ENCODE measurements at regions of chr5 and their contacts with region 1.

Region 1: GRCh38 chr5:103232393-103232999 is 26.1 kb upstream of the MACIR start:
- DNase-seq: peak in 2 of 35 experiments; percentile 18 to 60
- ATAC-seq: peak in 3 of 4 experiments; percentile 49 to 69 (median 67)
- H3K4me3 ChIP-seq: no peak overlapping the region
- H3K4me3 Mint-ChIP-seq: no peak overlapping the region
- H3K27ac ChIP-seq: no peak overlapping the region
- H3K27ac Mint-ChIP-seq: no peak overlapping the region
- H3K4me1 ChIP-seq: no peaks in the 10 kb centered on the region
- H3K4me1 Mint-ChIP-seq: no peaks in the 10 kb centered on the region
- H3K27me3 ChIP-seq: no peaks in the 10 kb centered on the region
- H3K27me3 Mint-ChIP-seq: peaks cover 6 to 14% of the 10 kb centered on the region in 2 donors

Region 2: GRCh38 chr5:102856389-102856777 is 376.1 kb before region 1 on chr5:
- CTCF ChIA-PET with region 1: no interaction called
- POLR2A ChIA-PET with region 1: no interaction called
- DNase-seq: no peak
- ATAC-seq: no peak
- H3K4me3 ChIP-seq: no peak overlapping the region
- H3K4me3 Mint-ChIP-seq: no peak overlapping the region
- H3K27ac ChIP-seq: no peak overlapping the region
- H3K27ac Mint-ChIP-seq: no peak overlapping the region
- H3K4me1 ChIP-seq: peaks cover 3% of the 10 kb centered on the region in 2 experiments
- H3K4me1 Mint-ChIP-seq: peaks cover 7 to 23% (median 21%) of the 10 kb centered on the region in 3 donors
- H3K27me3 ChIP-seq: no peaks in the 10 kb centered on the region
- H3K27me3 Mint-ChIP-seq: no peaks in the 10 kb centered on the region

Region 3: GRCh38 chr5:103475629-103476240 is 243.2 kb after region 1 on chr5:
- CTCF ChIA-PET with region 1: interaction called, 18 to 32 read pairs
- POLR2A ChIA-PET with region 1: no interaction called
- DNase-seq: peak in 1 of 35 experiments; percentile 48
- ATAC-seq: no peak
- H3K4me3 ChIP-seq: no peak overlapping the region
- H3K4me3 Mint-ChIP-seq: no peak overlapping the region
- H3K27ac ChIP-seq: no peak overlapping the region
- H3K27ac Mint-ChIP-seq: no peak overlapping the region
- H3K4me1 ChIP-seq: no peaks in the 10 kb centered on the region
- H3K4me1 Mint-ChIP-seq: no peaks in the 10 kb centered on the region
- H3K27me3 ChIP-seq: no peaks in the 10 kb centered on the region
- H3K27me3 Mint-ChIP-seq: peaks cover 11 to 22% of the 10 kb centered on the region in 2 donors